Gastrocnemius medialis (tissue), 4 donors: ENCODE measurements at regions of chr15 and their contacts with region 1.

Region 1: GRCh38 chr15:95259513-95259912 is 1028.2 kb downstream of the MCTP2 start:
- DNase-seq: peak; percentile 31 to 32
- ATAC-seq: peak; percentile 66 to 69
- H3K4me3 ChIP-seq: no peak overlapping the region
- H3K27ac ChIP-seq: peak overlapping the region in 2 of 4 donors; percentile 38 to 46
- H3K4me1 ChIP-seq: no peaks in the 10 kb centered on the region
- H3K27me3 ChIP-seq: no peaks in the 10 kb centered on the region
- CTCF ChIP-seq: peak; percentile 43 to 75 (median 69)
- POLR2A ChIP-seq: no peak

Region 2: GRCh38 chr15:94626949-94627348 is 632.6 kb before region 1 on chr15:
- in situ Hi-C with region 1: no loop called
- intact Hi-C with region 1: no loop called
- DNase-seq: no peak
- ATAC-seq: no peak
- H3K4me3 ChIP-seq: no peak overlapping the region
- H3K27ac ChIP-seq: no peak overlapping the region
- H3K4me1 ChIP-seq: no peaks in the 10 kb centered on the region
- H3K27me3 ChIP-seq: no peaks in the 10 kb centered on the region
- CTCF ChIP-seq: no peak
- POLR2A ChIP-seq: no peak

Region 3: GRCh38 chr15:95772857-95773394 is 513.4 kb after region 1 on chr15:
- in situ Hi-C with region 1: no loop called
- intact Hi-C with region 1: no loop called
- DNase-seq: no peak
- ATAC-seq: no peak
- H3K4me3 ChIP-seq: no peak overlapping the region
- H3K27ac ChIP-seq: no peak overlapping the region
- H3K4me1 ChIP-seq: no peaks in the 10 kb centered on the region
- H3K27me3 ChIP-seq: no peaks in the 10 kb centered on the region
- CTCF ChIP-seq: no peak
- POLR2A ChIP-seq: no peak

Region 4: DNA sequence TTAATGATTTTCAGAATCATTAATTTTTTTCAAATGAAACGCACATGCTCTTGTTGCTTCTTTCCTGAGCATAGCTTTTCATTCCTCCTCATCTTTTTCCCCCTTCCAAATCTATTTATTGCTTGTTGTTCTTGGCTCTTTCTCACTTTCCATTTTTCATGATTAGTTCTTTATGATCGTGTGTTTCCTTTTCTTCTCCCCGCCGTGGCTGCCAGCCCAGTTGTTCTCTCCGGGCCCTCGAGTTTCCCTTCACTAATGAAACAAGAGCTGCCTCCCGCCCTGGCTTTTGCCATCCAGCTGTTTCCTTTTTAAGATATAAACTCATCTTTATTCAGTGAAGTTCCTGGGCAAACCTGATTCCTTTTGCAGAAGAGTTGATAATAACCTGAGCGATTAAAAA is 900.8 kb after region 1 on chr15:
- in situ Hi-C with region 1: loop called in 1 of 4 experiments (anchors 25 kb)
- intact Hi-C with region 1: no loop called
- DNase-seq: no peak
- ATAC-seq: no peak
- H3K4me3 ChIP-seq: no peak overlapping the region
- H3K27ac ChIP-seq: peak overlapping the region in 3 of 4 donors; percentile 26 to 32 (median 30)
- H3K4me1 ChIP-seq: peaks cover 4 to 6% of the 10 kb centered on the region in 2 donors
- H3K27me3 ChIP-seq: no peaks in the 10 kb centered on the region
- CTCF ChIP-seq: no peak
- POLR2A ChIP-seq: no peak

Region 5: DNA sequence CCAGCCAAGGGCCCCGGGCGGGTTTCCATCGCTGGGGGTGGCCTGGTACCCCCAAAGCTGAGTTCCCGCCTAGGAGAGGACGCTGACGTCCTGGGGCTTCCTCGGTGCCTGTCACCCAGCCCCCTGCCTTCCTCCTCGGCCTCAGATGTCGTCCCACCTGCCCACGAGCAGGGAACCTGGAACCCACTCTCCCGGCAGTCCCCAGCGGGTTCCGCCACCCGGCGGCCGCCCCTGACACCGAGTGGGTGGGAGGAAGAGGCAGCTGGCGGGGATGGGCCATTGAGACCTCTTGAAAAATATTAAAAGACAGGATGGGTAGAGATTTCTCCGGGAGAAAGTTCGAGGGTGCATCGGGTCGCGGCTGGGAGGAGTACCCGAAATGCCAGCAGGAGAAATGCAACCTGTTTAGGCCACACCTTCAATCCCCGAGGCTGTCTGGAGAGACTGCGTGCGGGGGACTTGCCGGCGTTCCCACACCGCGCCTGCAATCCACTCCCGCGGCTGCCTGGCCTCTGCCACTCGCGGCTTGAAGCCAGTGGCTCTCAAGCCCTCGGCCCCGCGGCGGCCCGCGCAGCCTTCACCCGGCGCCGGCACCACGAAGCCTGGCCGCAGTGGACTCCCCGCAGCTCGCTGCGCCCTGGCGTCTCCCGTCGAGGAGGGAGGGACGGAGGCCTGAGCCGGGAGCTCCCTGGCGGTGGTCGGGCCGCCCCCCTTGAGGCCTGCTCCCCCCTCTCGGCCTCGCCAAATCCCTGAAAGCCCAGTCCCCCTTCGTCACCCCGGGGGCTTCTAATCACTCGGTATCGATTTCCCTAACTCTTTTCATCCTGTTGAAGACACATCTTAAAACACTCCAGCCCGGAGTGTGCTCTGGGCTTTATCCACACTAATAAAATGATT is 1062.4 kb after region 1 on chr15:
- in situ Hi-C with region 1: loop called in 2 of 4 experiments (anchors 25 kb)
- intact Hi-C with region 1: no loop called
- DNase-seq: no peak
- ATAC-seq: peak in 1 of 2 donors; percentile 35
- H3K4me3 ChIP-seq: peak overlapping the region; percentile 46 to 71 (median 58)
- H3K27ac ChIP-seq: peak overlapping the region; percentile 86 to 93 (median 89)
- H3K4me1 ChIP-seq: peaks cover 17 to 21% of the 10 kb centered on the region in 2 donors
- H3K27me3 ChIP-seq: peaks cover 52 to 56% (median 54%) of the 10 kb centered on the region in 3 donors
- CTCF ChIP-seq: no peak
- POLR2A ChIP-seq: no peak

Region 6: GRCh38 chr15:96345560-96346399 is 1086.3 kb after region 1 on chr15:
- in situ Hi-C with region 1: loop called in 2 of 4 experiments (anchors 10 to 25 kb)
- intact Hi-C with region 1: loop called (anchors 5 kb)
- DNase-seq: peak; percentile 67 to 78
- ATAC-seq: peak; percentile 86 to 87
- H3K4me3 ChIP-seq: peak overlapping the region; percentile 62 to 76 (median 67)
- H3K27ac ChIP-seq: peak overlapping the region; percentile 93 to 98 (median 95)
- H3K4me1 ChIP-seq: peaks cover 0 to 19% of the 10 kb centered on the region in 2 donors
- H3K27me3 ChIP-seq: no peaks in the 10 kb centered on the region
- CTCF ChIP-seq: peak; percentile 51 to 80 (median 74)
- POLR2A ChIP-seq: peak; percentile 19 to 40

Region 7: GRCh38 chr15:96893159-96893906 is 1633.8 kb after region 1 on chr15:
- in situ Hi-C with region 1: no loop called
- intact Hi-C with region 1: loop called (anchors 10 kb)
- DNase-seq: no peak
- ATAC-seq: no peak
- H3K4me3 ChIP-seq: no peak overlapping the region
- H3K27ac ChIP-seq: no peak overlapping the region
- H3K4me1 ChIP-seq: no peaks in the 10 kb centered on the region
- H3K27me3 ChIP-seq: no peaks in the 10 kb centered on the region
- CTCF ChIP-seq: peak in 1 of 5 experiments; percentile 36
- POLR2A ChIP-seq: no peak

Region 8: DNA sequence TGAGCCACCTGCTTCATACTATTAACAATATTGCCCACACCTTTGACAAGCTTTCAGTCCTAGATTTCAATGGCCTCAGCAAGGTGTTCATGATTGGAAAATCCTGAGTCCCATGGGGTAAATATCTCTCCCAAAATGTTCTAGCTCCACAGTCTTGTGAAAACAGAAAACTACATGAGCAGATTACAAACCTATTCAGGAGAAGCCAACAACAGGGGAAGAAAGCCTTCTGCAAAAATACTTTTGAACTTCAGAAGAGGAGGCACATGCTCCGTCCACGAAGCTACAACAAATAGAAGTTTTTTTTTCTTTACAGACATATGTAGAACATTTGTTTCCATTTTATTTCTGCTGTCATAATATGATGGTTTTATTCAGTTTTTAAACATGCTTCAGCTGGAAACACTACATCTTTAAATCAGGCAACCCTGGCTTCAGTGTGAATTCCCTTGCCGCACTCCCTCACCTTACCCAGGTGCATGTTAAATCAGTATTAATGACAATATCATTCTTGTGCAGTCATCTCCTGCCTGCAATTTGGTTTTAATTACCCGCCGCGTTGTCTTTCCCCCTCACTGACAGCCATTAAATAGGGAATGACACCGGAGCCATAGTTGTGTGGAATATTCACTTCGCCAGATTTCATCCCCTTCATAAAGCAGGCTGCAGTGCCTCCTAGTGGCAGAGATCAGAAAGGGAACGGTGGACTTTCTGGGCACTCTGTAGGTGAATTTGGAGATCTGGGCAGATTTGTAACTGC is 1975.5 kb after region 1 on chr15:
- in situ Hi-C with region 1: loop called in 2 of 4 experiments (anchors 25 kb)
- intact Hi-C with region 1: loop called (anchors 5 kb)
- DNase-seq: peak in 1 of 2 donors; percentile 15
- ATAC-seq: peak in 1 of 2 donors; percentile 60
- H3K4me3 ChIP-seq: peak overlapping the region in 1 of 4 donors; percentile 4
- H3K27ac ChIP-seq: no peak overlapping the region
- H3K4me1 ChIP-seq: no peaks in the 10 kb centered on the region
- H3K27me3 ChIP-seq: no peaks in the 10 kb centered on the region
- CTCF ChIP-seq: peak; percentile 45 to 71 (median 60)
- POLR2A ChIP-seq: no peak